ENCODE measurements at regions of chr4 and their contacts with region 1.

Region 1: GRCh38 chr4:103008875-103009729 is 10.4 kb downstream of the SLC9B1 start:
- DNase-seq: peak in 1 of 2 experiments; percentile 58
- H3K4me3 ChIP-seq: no peak overlapping the region
- H3K4me3 Mint-ChIP-seq: no peak overlapping the region
- H3K27ac Mint-ChIP-seq: no peak overlapping the region
- H3K4me1 ChIP-seq: no peaks in the 10 kb centered on the region; the same call in 1 of the 2 replicates
- H3K4me1 Mint-ChIP-seq: no peaks in the 10 kb centered on the region
- H3K27me3 ChIP-seq: no peaks in the 10 kb centered on the region
- H3K27me3 Mint-ChIP-seq: peaks cover 2% of the 10 kb centered on the region
- CTCF ChIP-seq: peak; percentile 62 to 68

Region 2: DNA sequence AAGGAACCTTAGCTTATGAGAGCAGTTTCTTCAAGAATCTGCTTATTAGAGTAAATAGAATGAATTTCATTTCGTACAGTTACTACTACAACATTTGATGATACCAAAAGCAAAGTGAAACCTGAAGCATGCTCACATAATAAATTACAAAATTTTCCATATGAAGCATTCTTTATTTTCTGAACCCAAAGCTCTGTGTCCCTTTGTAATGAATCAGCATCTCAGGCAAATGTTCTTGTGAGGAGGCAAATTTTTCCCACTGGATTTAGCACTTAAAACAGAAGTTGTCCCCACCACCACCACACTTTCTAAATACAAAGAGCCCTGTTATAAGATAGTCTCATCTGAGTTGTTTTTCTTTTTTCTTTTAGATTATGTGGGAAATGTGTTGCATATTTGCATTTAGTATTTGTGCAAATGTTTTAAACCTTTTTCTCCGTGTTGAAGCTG is 578.6 kb before region 1 on chr4:
- CTCF ChIA-PET with region 1: no interaction called
- POLR2A ChIA-PET with region 1: no interaction called
- intact Hi-C with region 1: loop called (anchors 1 kb)
- DNase-seq: no peak
- H3K4me3 ChIP-seq: peak overlapping the region; percentile 41
- H3K4me3 Mint-ChIP-seq: peak overlapping the region; percentile 82
- H3K27ac Mint-ChIP-seq: peak overlapping the region; percentile 77
- H3K4me1 ChIP-seq: peaks cover 5% of the 10 kb centered on the region; the same call in 1 of the 2 replicates
- H3K4me1 Mint-ChIP-seq: peaks cover 10% of the 10 kb centered on the region
- H3K27me3 ChIP-seq: no peaks in the 10 kb centered on the region
- H3K27me3 Mint-ChIP-seq: no peaks in the 10 kb centered on the region
- CTCF ChIP-seq: no peak

Region 3: GRCh38 chr4:102449751-102450352 is 559.2 kb before region 1 on chr4:
- CTCF ChIA-PET with region 1: no interaction called
- POLR2A ChIA-PET with region 1: no interaction called
- intact Hi-C with region 1: loop called (anchors 1 kb)
- DNase-seq: peak; percentile 43 to 64
- H3K4me3 ChIP-seq: no peak overlapping the region
- H3K4me3 Mint-ChIP-seq: no peak overlapping the region
- H3K27ac Mint-ChIP-seq: no peak overlapping the region
- H3K4me1 ChIP-seq: no peaks in the 10 kb centered on the region
- H3K4me1 Mint-ChIP-seq: no peaks in the 10 kb centered on the region
- H3K27me3 ChIP-seq: no peaks in the 10 kb centered on the region
- H3K27me3 Mint-ChIP-seq: no peaks in the 10 kb centered on the region
- CTCF ChIP-seq: peak; percentile 59 to 66

Region 4: GRCh38 chr4:102760645-102761295 is 248.3 kb before region 1 on chr4 and contains the start of gene MANBA:
- CTCF ChIA-PET with region 1: no interaction called
- POLR2A ChIA-PET with region 1: no interaction called
- intact Hi-C with region 1: loop called (anchors 5 kb)
- DNase-seq: peak; percentile 82
- H3K4me3 ChIP-seq: peak within 1 kb of the TSS; percentile 83
- H3K4me3 Mint-ChIP-seq: peak within 1 kb of the TSS; percentile 80
- H3K27ac Mint-ChIP-seq: peak within 1 kb of the TSS; percentile 76
- H3K4me1 ChIP-seq: peaks cover 7% of the 10 kb centered on the region
- H3K4me1 Mint-ChIP-seq: peaks cover 19% of the 10 kb centered on the region
- H3K27me3 ChIP-seq: no peaks in the 10 kb centered on the region
- H3K27me3 Mint-ChIP-seq: no peaks in the 10 kb centered on the region
- CTCF ChIP-seq: no peak
- total RNA-seq, gene MANBA: 52.1 and 53.5 TPM in 2 replicates

Region 5: DNA sequence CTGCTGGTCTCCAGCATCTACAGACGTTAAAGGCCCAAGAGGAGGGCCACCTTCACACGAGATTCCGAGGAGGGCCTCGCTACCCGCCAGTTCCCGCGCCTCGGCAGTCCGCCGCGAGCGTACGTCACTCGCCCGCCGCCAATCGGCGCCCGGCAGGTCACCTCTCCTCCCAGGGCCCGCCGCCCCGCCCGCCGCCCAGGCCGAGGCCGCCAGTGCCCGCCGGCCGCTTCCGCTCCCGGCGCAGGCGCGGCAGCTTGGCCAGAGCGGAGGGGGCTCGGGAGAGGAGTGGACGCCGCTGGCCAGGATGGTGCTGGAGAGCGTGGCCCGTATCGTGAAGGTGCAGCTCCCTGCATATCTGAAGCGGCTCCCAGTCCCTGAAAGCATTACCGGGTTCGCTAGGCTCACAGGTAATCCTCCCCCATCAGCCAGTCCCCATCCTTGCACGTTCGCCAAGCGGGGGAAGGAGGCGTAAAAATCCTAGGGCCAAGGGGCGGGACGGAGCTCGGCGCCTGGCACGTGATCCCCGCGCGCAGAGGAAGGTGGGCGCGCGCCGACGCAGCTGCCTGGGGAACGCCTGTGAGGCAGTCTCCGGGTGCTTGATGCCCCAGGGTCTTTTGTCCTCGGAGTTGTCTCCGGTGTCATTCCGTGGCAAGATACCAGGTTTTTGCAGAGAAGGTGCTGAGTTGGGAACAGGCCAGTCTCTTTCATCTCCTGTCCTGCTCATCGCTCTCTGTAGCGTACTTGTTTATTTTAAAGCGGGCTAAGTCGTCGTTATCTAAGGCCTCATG is 140.1 kb before region 1 on chr4 and contains the start of gene CISD2:
- CTCF ChIA-PET with region 1: no interaction called
- POLR2A ChIA-PET with region 1: no interaction called
- intact Hi-C with region 1: loop called (anchors 5 kb)
- DNase-seq: peak; percentile 93 to 95
- H3K4me3 ChIP-seq: peak within 1 kb of the TSS; percentile 84
- H3K4me3 Mint-ChIP-seq: peak within 1 kb of the TSS; percentile 97
- H3K27ac Mint-ChIP-seq: peak within 1 kb of the TSS; percentile 95
- H3K4me1 ChIP-seq: 0 out of 2 replicates have a peak, but pooled peaks cover 3% of the 10 kb centered on the region
- H3K4me1 Mint-ChIP-seq: peaks cover 6% of the 10 kb centered on the region
- H3K27me3 ChIP-seq: no peaks in the 10 kb centered on the region
- H3K27me3 Mint-ChIP-seq: no peaks in the 10 kb centered on the region
- CTCF ChIP-seq: no peak
- total RNA-seq, gene CISD2: 54.0 and 58.6 TPM in 2 replicates

Region 6: DNA sequence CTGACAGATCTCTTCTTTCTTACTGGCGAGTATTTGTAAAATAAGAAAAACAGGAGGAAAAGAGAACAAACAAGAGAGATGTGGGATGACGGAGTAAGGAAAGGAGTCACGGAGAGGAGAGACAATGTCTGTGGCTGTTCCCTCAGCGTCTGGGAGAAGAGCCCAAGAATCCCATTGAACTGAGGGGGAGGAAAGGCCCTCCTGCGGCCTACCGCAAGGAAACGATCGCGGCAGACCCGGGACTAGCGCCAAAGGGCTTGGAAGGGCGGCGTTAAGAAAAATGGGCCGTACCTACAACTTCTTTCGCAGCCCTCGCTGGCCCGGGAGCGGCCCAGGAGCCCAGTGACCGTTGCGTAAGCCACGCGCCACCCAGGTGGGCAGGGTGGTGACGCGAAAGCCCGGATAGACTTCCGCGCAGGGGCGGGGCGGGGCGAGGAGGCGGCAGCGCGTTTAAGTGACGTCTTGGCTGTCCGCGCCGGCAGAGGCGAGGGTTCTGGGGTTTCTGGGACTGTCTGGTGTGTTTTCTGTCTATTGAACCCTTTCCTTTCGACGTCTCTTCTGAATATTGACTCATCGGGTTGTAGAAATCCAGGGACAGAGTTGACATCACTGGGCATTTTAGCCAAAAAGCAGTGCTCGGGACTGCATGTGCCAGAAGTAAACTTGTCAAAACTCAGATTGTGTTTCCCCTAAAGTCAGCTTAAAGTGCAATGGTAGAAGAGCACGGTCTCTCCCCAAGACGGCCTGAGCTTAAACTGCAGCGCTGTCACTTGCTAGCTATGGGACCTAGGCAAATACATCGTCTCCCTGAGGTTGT is 10.4 kb after region 1 on chr4 and contains the start of gene SLC9B1:
- CTCF ChIA-PET with region 1: no interaction called
- POLR2A ChIA-PET with region 1: interaction called, 17 read pairs
- intact Hi-C with region 1: no loop called
- DNase-seq: peak; percentile 95 to 97
- H3K4me3 ChIP-seq: peak within 1 kb of the TSS; percentile 49
- H3K4me3 Mint-ChIP-seq: peak within 1 kb of the TSS; percentile 99
- H3K27ac Mint-ChIP-seq: peak within 1 kb of the TSS; percentile 99
- H3K4me1 ChIP-seq: no peaks in the 10 kb centered on the region
- H3K4me1 Mint-ChIP-seq: peaks cover 8% of the 10 kb centered on the region
- H3K27me3 ChIP-seq: no peaks in the 10 kb centered on the region
- H3K27me3 Mint-ChIP-seq: no peaks in the 10 kb centered on the region
- CTCF ChIP-seq: no peak
- total RNA-seq, gene SLC9B1: 1.7 TPM in 1 of 2 replicates, not detected in the other

Region 7: GRCh38 chr4:103091601-103092223 is 82.6 kb after region 1 on chr4:
- CTCF ChIA-PET with region 1: interaction called, 3 read pairs
- POLR2A ChIA-PET with region 1: no interaction called
- intact Hi-C with region 1: loop called (anchors 1 kb)
- DNase-seq: peak; percentile 42 to 56
- H3K4me3 ChIP-seq: no peak overlapping the region
- H3K4me3 Mint-ChIP-seq: no peak overlapping the region
- H3K27ac Mint-ChIP-seq: no peak overlapping the region
- H3K4me1 ChIP-seq: no peaks in the 10 kb centered on the region
- H3K4me1 Mint-ChIP-seq: peaks cover 3% of the 10 kb centered on the region
- H3K27me3 ChIP-seq: no peaks in the 10 kb centered on the region
- H3K27me3 Mint-ChIP-seq: no peaks in the 10 kb centered on the region
- CTCF ChIP-seq: peak; percentile 44 to 57

Measured in Caco-2 (cell line).